ENCODE measurements at regions of chr19 and their contacts with region 1.

Region 1: DNA sequence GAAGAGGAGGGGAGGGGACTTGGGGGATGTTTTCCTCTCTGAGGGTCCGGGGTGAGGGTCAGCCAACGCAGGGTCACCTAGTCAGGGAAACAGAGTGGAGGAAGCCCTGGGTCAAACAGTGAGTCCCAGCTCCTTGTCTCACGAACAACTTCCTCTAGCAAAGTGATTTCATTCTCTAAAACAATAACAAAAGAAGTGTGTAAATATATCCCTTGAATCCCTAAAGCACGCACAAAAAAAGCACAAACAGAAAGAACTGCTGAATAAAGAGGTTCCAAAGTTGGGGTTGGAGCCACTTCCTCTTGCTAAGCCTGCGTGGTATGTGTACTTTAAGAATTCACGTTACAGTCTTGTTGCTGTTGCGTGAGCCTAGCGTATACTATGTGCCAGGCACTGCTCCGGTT is 1.5 kb upstream of the C5AR2 start:
- DNase-seq: no peak
- H3K4me3 ChIP-seq: no peak overlapping the region
- H3K27ac ChIP-seq: no peak overlapping the region
- H3K4me1 ChIP-seq: no peaks in the 10 kb centered on the region
- H3K27me3 ChIP-seq: no peaks in the 10 kb centered on the region
- CTCF ChIP-seq: no peak

Region 2: DNA sequence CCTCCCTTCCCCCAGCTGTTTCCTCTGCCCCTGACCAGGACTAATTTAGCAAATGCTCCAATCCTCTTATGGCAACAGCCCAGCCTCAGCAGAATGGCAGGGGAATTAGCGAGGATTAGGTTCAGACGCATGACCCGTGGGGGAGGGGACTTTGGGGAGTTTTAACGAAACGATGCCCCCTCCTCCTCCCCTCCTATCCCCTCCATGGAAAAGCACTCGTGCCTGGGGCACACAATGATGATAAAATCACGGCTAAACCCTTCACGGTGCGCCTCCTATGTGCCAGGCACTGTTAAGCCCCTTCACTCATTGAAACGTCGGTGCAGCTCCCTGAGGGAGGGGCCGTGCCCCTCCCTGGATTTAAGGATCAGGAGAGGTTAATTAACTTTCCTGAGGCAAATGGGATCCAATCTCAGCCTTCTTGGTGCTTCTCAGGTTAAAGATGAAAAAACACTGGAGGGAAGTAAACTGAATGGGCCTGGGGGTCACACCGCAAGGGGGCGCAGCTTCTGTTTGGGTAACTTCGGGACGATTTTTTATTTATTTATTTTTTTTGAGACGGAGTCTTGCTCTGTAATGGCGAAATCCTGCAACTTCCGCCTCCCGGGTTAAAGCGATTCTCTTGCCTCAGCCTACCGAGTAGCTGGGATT is 518.5 kb after region 1 on chr19:
- CTCF ChIA-PET with region 1: interaction called, 12 read pairs
- POLR2A ChIA-PET with region 1: no interaction called
- intact Hi-C with region 1: no loop called
- DNase-seq: peak; percentile 49
- H3K4me3 ChIP-seq: peak overlapping the region; percentile 27
- H3K27ac ChIP-seq: no peak overlapping the region
- H3K4me1 ChIP-seq: peaks cover 4% of the 10 kb centered on the region
- H3K27me3 ChIP-seq: no peaks in the 10 kb centered on the region
- CTCF ChIP-seq: peak; percentile 79